H1 (cell line): ENCODE measurements at regions of chr11 and their contacts with region 1.

Region 1: DNA sequence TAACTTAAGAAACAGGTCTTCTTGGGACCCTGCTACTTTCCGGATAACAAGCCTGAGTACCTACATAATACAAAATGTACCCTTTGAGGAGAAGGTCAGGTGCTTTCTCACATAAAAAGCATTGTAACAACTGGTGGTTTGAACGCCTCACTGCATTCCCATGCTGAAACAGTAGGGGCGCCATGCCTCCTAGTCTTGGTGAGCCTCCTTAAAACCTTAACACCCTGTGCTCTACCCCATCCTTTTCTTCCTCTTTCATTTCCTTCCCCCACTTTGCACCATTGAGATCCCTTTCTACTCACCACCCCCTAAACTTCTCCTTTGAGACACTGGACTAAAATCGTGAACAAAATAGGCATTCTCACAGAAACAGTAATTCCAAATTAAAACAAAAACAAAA is 729.3 kb downstream of the NTM start:
- DNase-seq: peak in 1 of 2 experiments; percentile 81
- H3K4me3 ChIP-seq: no peak overlapping the region
- H3K27ac ChIP-seq: no peak overlapping the region
- H3K4me1 ChIP-seq: peaks cover 5 to 24% (median 10%) of the 10 kb centered on the region in 4 experiments; a peak in 6 of 7 replicates
- H3K27me3 ChIP-seq: no peaks in the 10 kb centered on the region
- CTCF ChIP-seq: peak; percentile 56 to 90 (median 67)
- EP300 ChIP-seq: no peak
- POLR2A ChIP-seq: no peak
- RAD21 ChIP-seq: peak; percentile 55 to 56

Region 2: DNA sequence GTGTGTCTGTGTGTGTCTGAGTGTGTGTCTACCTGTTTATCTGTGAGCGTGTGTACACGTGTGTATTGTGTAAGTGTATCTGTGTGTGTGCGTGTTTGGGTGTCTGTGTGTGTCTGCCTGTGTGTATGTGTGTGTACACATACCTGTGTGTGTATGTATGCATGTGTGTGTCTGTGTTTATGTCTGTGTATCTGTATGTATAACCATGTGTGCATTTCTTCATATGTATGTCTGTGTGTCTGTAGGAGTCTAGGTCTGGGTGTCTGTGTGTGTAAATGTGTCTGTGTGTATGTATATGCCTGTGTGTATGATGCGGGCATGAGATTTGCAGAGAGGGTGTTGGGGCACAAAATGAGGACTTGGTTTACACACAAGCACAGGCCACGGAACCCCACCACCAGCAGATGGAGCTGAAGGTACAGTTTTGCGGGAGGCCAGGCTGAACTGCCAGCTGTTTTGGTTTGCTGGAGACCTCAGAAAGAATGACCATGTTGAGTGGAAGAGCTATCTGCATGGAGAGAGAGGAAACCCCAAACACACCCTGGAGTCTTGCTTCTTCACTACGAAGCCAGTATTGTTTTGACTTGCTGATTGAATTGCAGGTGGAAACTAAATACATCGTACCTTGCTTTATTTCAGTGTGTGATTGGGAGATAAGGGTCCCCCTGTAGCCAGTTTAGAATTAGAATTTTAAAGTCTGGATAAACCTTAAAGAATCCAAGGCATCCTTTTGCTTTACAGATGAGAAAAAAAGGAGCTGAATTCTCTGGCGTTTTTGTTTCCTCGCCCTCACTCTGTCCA is 232.0 kb before region 1 on chr11:
- CTCF ChIA-PET with region 1: interaction called, 12 read pairs
- POLR2A ChIA-PET with region 1: no interaction called
- DNase-seq: peak; percentile 68 to 86
- H3K4me3 ChIP-seq: no peak overlapping the region
- H3K27ac ChIP-seq: no peak overlapping the region
- H3K4me1 ChIP-seq: peaks cover 18 to 33% (median 20%) of the 10 kb centered on the region in 4 experiments
- H3K27me3 ChIP-seq: no peaks in the 10 kb centered on the region
- CTCF ChIP-seq: peak; percentile 91 to 98 (median 96)
- EP300 ChIP-seq: no peak
- POLR2A ChIP-seq: no peak
- RAD21 ChIP-seq: peak; percentile 96

Region 3: DNA sequence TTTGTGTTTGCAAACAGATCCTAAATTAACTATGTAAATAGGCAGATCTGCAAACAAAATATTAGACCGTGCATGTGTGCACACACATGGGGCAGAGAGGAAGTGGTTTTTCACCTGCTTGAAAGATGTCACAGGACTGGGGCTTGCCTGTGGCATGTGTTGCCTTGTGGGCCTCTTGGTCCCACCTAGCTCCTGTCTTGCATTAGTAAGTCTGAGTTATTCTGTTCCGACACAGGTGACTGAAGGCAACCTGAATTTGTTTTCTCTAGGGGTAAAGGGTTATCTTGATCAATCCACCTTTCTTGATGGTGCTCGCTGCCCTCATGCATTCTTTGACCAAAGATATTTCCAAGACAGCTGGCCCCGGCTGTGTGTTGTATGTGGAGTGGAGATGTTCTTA is 61.7 kb before region 1 on chr11:
- CTCF ChIA-PET with region 1: interaction called, 11 read pairs
- POLR2A ChIA-PET with region 1: no interaction called
- DNase-seq: no peak
- H3K4me3 ChIP-seq: no peak overlapping the region
- H3K27ac ChIP-seq: no peak overlapping the region
- H3K4me1 ChIP-seq: peaks cover 0 to 17% (median 12%) of the 10 kb centered on the region in 4 experiments; a peak in 6 of 7 replicates
- H3K27me3 ChIP-seq: no peaks in the 10 kb centered on the region; a peak in 1 of 7 replicates
- CTCF ChIP-seq: no peak
- EP300 ChIP-seq: no peak
- POLR2A ChIP-seq: no peak
- RAD21 ChIP-seq: no peak

Region 4: DNA sequence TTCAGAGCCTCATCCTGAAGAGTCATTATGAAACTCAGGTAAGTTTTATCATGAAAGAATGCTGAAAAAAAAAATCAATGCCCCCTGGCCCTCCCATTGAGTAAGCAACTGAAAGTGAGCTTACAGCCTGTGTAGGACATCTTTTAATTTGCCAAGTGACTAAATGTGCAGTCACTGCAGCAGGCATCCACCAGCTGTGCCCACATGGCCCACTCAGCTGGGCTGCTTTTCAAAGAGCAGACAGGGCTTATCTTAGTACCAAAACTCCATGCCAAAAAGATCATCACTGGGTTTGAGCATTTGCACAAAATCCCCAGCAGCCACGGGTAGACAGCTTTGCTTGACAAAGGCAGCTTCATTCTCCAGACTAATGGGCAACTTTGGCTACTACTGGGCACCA is 19.6 kb before region 1 on chr11:
- CTCF ChIA-PET with region 1: interaction called, 10 read pairs
- POLR2A ChIA-PET with region 1: no interaction called
- DNase-seq: no peak
- H3K4me3 ChIP-seq: no peak overlapping the region
- H3K27ac ChIP-seq: no peak overlapping the region
- H3K4me1 ChIP-seq: no peaks in the 10 kb centered on the region
- H3K27me3 ChIP-seq: no peaks in the 10 kb centered on the region
- CTCF ChIP-seq: no peak
- EP300 ChIP-seq: no peak
- POLR2A ChIP-seq: no peak
- RAD21 ChIP-seq: no peak

Region 5: DNA sequence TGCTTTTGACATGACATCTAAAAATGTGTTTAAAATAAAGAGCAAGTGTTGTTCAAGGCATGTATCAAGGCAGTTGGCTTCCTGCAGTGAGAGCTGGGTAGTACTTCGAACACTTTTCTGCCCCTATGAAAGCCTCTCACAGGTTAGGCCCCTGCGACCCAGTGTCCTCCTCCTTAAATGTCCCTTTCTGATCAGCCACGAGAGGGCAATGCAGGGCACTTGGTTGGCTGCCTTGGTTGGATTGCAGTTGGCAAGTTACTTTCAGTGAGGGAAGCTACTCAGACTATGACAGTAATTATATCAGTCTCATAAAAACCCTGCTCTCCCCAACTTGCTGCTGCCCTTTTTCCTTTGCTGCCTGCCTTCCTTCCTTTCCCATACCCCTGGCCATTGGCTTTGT is 14.5 kb after region 1 on chr11:
- CTCF ChIA-PET with region 1: interaction called, 19 read pairs
- POLR2A ChIA-PET with region 1: no interaction called
- DNase-seq: no peak
- H3K4me3 ChIP-seq: no peak overlapping the region
- H3K27ac ChIP-seq: no peak overlapping the region
- H3K4me1 ChIP-seq: peaks cover 2 to 15% (median 12%) of the 10 kb centered on the region in 4 experiments; a peak in 6 of 7 replicates
- H3K27me3 ChIP-seq: no peaks in the 10 kb centered on the region
- CTCF ChIP-seq: peak; percentile 77 to 88 (median 85)
- EP300 ChIP-seq: no peak
- POLR2A ChIP-seq: no peak
- RAD21 ChIP-seq: peak; percentile 72 to 85

Region 6: GRCh38 chr11:132119573-132119972 is 19.9 kb after region 1 on chr11:
- CTCF ChIA-PET with region 1: interaction called, 42 read pairs
- POLR2A ChIA-PET with region 1: no interaction called
- DNase-seq: no peak
- H3K4me3 ChIP-seq: no peak overlapping the region
- H3K27ac ChIP-seq: no peak overlapping the region
- H3K4me1 ChIP-seq: peaks cover 8 to 25% (median 21%) of the 10 kb centered on the region in 4 experiments
- H3K27me3 ChIP-seq: no peaks in the 10 kb centered on the region
- CTCF ChIP-seq: no peak
- EP300 ChIP-seq: no peak
- POLR2A ChIP-seq: no peak
- RAD21 ChIP-seq: no peak